Panc1 (cell line): ENCODE measurements at regions of chr5 and their contacts with region 1.

Region 1: DNA sequence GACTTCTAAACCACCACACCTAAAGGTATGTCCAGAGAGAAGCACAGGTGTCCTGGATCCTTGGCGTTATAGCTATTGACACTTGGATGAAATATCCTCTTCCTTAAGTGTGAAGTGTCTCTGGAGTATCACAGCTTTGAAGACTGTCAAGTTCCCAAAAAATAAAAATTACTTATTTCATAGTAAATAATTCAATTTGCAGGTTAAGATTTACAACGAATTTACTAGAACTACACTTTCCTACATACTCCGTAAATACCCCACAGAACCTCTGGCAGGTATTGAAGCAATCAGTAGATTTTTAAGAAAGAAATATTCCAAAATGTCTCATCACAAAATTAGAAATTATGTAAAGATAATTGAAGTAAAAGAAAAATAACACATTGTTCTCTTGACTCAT is 27.1 kb upstream of the POC5 start:
- DNase-seq: no peak
- ATAC-seq: no peak
- H3K4me3 ChIP-seq: no peak overlapping the region
- H3K27ac ChIP-seq: no peak overlapping the region
- H3K4me1 ChIP-seq: no peaks in the 10 kb centered on the region
- H3K27me3 ChIP-seq: peaks cover 10% of the 10 kb centered on the region; the same call in 1 of the 2 replicates
- CTCF ChIP-seq: no peak

Region 2: DNA sequence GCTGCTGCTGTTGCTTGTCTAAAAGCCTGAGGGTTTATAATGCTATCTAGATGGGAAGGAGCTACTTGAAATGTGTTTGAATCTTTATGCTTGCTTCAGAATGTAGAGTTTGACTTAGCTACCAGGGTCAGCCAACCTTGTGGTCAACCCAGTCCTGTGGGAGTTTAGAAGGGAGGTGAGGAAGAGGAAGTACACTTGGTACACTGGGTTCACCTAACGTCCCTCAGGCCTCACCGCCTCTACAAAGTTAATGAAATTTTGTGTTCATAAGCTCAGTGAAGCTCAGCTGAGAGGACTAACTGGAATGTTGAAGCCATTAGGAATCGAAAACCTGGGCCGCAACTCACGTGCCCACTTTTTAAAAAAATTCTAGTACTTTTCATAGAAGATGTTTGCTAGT is 669.4 kb after region 1 on chr5:
- CTCF ChIA-PET with region 1: interaction called, 11 read pairs
- POLR2A ChIA-PET with region 1: no interaction called
- in situ Hi-C with region 1: no loop called
- intact Hi-C with region 1: no loop called
- DNase-seq: no peak
- ATAC-seq: no peak
- H3K4me3 ChIP-seq: no peak overlapping the region
- H3K27ac ChIP-seq: no peak overlapping the region
- H3K4me1 ChIP-seq: no peaks in the 10 kb centered on the region
- H3K27me3 ChIP-seq: no peaks in the 10 kb centered on the region; the same call in 1 of the 2 replicates
- CTCF ChIP-seq: no peak